AG04449 (cell line): ENCODE measurements at regions of chr19 and their contacts with region 1.

Region 1: GRCh38 chr19:17390665-17391370 is 3.2 kb downstream of the CCDC194 start:
- DNase-seq: peak; percentile 29
- H3K4me3 ChIP-seq: peak overlapping the region; percentile 63
- CTCF ChIP-seq: peak; percentile 76

Region 2: DNA sequence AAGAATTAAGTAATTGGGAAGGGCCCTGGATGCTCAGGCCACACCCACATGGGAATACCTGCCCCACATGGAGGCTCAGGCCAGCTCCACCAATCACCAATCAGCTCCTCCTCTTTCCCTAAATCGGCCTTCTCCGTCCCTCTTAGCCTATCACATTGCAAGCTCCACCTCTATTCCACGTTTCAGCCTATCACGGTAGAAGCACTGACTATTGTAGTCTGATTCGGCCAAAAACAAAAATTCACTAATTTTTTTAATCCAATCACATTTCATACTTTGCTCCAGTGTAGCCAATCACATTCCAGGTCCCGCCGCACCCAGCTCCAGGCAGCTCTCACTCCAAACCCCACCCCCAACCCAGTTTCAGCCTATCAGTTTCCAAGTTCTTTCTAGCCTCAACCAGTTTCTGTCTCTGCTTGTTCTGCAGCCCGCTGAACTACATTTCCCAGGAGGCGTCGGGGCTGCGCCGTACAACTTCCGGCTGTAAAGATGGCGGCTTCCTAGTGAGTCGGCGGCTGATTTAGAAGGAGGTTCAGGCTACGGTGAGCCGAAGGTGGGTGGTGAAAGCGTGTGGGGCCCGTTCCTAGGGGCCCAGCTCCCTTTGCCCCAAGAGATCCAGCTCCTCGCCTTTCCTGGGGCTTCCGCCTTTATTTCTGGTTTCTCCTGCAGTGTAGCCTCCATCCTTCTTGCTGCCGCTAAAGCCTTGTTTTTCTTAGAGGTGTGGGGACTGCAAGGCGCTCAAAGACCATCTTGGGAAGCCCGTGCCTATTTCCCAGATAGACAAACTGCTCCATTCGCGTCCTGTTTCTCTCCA is 123.6 kb before region 1 on chr19 and contains the start of gene BABAM1:
- CTCF ChIA-PET with region 1: no interaction called
- POLR2A ChIA-PET with region 1: no interaction called
- DNase-seq: peak; percentile 99
- H3K4me3 ChIP-seq: peak within 1 kb of the TSS; percentile 98
- CTCF ChIP-seq: no peak

Region 3: DNA sequence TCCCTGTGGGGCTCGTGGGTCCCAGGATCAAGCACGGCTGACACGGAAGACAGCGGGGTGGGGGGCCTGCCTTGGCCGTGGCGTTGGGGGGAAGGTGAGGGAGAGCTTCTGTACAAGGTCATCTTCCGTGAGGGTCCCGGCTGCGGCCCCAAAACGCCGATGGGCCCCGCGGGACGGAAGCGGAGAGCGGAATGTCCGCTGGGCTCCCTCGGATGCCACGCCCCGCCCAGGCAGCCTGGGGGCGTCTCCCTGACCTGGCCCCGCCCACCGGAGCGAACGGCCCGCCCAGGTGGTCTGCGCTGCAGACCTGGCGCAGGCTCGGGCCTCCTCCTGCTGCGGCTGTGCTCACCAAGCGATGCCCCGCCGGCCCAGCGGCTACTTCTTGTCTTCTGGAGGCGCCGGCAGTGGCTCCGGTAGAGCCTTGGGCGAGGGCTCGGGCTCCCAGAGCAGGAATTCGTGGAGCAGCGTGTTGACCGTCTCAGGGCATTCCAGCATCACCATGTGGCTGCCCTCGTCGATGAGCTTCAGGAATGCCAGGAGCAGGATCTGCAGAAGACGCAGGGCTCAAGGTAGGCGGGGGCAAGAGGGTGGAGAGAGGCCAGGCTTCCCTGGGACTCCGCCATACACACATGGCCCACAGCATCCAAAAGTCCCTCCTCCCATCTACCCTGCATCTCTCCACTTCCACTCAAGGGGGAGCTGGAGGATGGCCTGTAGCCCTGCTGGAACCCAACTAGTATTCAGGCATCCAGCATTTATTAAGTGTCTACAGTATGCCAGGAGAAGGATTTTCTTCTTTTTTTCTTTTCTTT is 98.3 kb before region 1 on chr19:
- CTCF ChIA-PET with region 1: interaction called, 103 read pairs
- POLR2A ChIA-PET with region 1: interaction called, 3 read pairs
- DNase-seq: no peak
- H3K4me3 ChIP-seq: peak overlapping the region; percentile 63
- CTCF ChIP-seq: peak; percentile 82

Region 4: GRCh38 chr19:17346109-17346671 is 44.6 kb before region 1 on chr19:
- CTCF ChIA-PET with region 1: interaction called, 208 read pairs
- POLR2A ChIA-PET with region 1: interaction called, 3 read pairs
- DNase-seq: no peak
- H3K4me3 ChIP-seq: no peak overlapping the region
- CTCF ChIP-seq: peak; percentile 93

Region 5: GRCh38 chr19:17376935-17377600 is 13.8 kb before region 1 on chr19 and contains the start of gene PLVAP:
- CTCF ChIA-PET with region 1: interaction called, 95 read pairs
- POLR2A ChIA-PET with region 1: no interaction called
- DNase-seq: no peak
- H3K4me3 ChIP-seq: no peak within 1 kb of the TSS
- CTCF ChIP-seq: no peak

Region 6: GRCh38 chr19:17468302-17469091 is 77.7 kb after region 1 on chr19:
- CTCF ChIA-PET with region 1: interaction called, 18 read pairs
- POLR2A ChIA-PET with region 1: no interaction called
- DNase-seq: no peak
- H3K4me3 ChIP-seq: peak overlapping the region; percentile 75
- CTCF ChIP-seq: no peak